ENCODE measurements at regions of chr1 and their contacts with region 1.

Region 1: GRCh38 chr1:198669023-198669698 is 30.3 kb downstream of the PTPRC start:
- DNase-seq: peak; percentile 95
- ATAC-seq: peak; percentile 87
- H3K4me3 ChIP-seq: no peak overlapping the region
- H3K27ac ChIP-seq: peak overlapping the region; percentile 57; the same call in 1 of the 2 replicates
- H3K4me1 ChIP-seq: peaks cover 10% of the 10 kb centered on the region
- H3K27me3 ChIP-seq: no peaks in the 10 kb centered on the region
- CTCF ChIP-seq: no peak
- POLR2A ChIP-seq: no peak
- RAD21 ChIP-seq: no peak

Region 2: DNA sequence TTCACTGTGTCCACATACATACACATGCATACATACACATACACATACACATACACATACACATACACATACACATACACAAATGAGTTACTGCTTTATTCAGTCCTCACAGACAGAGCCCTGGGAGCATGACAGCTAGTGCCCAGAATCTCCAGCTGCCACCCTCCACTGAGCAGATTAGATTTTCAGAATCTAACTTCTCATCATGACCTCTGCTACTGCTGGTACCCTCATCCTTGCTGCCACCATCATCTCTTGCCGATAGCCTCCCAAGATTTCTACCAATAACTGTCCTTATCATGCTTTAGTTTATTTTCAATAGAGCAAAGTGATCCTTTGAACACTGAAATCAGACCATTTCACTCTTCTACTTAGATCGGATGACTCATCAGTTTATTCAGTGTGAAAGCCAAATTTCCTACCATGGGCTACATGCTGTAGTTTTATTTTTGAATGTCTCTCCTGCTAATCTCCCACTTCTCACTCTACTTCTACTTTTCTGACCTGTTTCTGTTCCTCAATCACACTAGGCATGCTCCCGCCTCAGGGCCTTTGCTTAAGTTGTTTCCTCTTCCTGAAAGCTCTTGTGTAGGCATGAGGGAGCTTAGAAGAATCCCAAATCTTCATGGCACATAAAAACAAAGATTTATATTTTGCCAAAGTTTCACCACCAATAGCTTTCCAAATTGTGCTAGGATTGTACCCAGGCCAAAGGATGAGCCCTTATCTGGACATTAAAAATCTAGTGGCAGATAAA is 171.6 kb before region 1 on chr1:
- CTCF ChIA-PET with region 1: no interaction called
- POLR2A ChIA-PET with region 1: no interaction called
- dilution Hi-C with region 1: no loop called
- in situ Hi-C with region 1: no loop called
- intact Hi-C with region 1: loop called (anchors 2 kb)
- DNase-seq: peak; percentile 80
- ATAC-seq: peak; percentile 31
- H3K4me3 ChIP-seq: no peak overlapping the region
- H3K27ac ChIP-seq: peak overlapping the region; percentile 78
- H3K4me1 ChIP-seq: peaks cover 31% of the 10 kb centered on the region
- H3K27me3 ChIP-seq: no peaks in the 10 kb centered on the region
- CTCF ChIP-seq: no peak
- POLR2A ChIP-seq: no peak
- RAD21 ChIP-seq: no peak

Measured in IMR-90 (cell line).